ENCODE measurements at regions of chr10 and their contacts with region 1.

Region 1: GRCh38 chr10:84149854-84150253 is 10.5 kb downstream of the GHITM start:
- DNase-seq: no peak
- ATAC-seq: no peak
- H3K4me3 ChIP-seq: no peak overlapping the region
- H3K4me3 Mint-ChIP-seq: no peak overlapping the region
- H3K27ac ChIP-seq: no peak overlapping the region
- H3K27ac Mint-ChIP-seq: no peak overlapping the region
- H3K4me1 ChIP-seq: no peaks in the 10 kb centered on the region
- H3K4me1 Mint-ChIP-seq: no peaks in the 10 kb centered on the region
- H3K27me3 ChIP-seq: no peaks in the 10 kb centered on the region
- H3K27me3 Mint-ChIP-seq: no peaks in the 10 kb centered on the region
- CTCF ChIP-seq: no peak

Region 2: GRCh38 chr10:84214612-84215235 is 64.9 kb after region 1 on chr10:
- intact Hi-C with region 1: loop called (anchors 2 kb)
- DNase-seq: peak; percentile 54 to 57
- ATAC-seq: peak; percentile 73 to 97 (median 92)
- H3K4me3 ChIP-seq: no peak overlapping the region
- H3K4me3 Mint-ChIP-seq: peak overlapping the region; percentile 51
- H3K27ac ChIP-seq: no peak overlapping the region
- H3K27ac Mint-ChIP-seq: no peak overlapping the region
- H3K4me1 ChIP-seq: no peaks in the 10 kb centered on the region
- H3K4me1 Mint-ChIP-seq: peaks cover 0 to 7% of the 10 kb centered on the region in 2 donors
- H3K27me3 ChIP-seq: no peaks in the 10 kb centered on the region
- H3K27me3 Mint-ChIP-seq: peaks cover 0 to 5% of the 10 kb centered on the region in 2 donors
- CTCF ChIP-seq: peak; percentile 61